WTC11 (cell line): ENCODE measurements at regions of chrX and their contacts with region 1.

Region 1: GRCh38 chrX:154533416-154533815 is 13.2 kb downstream of the G6PD start:
- DNase-seq: no peak
- ATAC-seq: no peak
- H3K4me3 Mint-ChIP-seq: no peak overlapping the region
- H3K27ac Mint-ChIP-seq: no peak overlapping the region
- H3K4me1 Mint-ChIP-seq: no peaks in the 10 kb centered on the region
- H3K27me3 Mint-ChIP-seq: no peaks in the 10 kb centered on the region
- CTCF ChIP-seq: no peak

Region 2: DNA sequence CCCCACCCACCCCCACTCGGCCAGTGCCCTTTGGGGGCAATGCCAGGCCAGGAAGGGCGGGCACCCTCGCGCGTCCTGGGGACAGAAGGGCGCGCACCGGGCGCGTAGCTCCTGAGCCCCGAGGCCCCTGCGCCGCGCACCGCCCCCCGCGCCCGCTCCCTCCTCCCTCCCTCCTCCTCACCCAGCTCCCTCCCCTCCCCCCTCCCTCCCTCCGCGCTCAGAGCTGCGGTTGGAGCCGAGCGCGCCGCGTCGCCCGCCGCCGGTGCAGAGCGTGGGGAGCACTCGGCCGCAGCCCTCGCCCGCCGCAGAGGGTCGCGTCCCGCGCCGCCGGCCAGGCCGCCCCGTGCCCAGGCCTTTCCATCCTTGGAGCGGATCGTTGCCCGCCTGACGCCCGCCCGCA is 1016.0 kb before region 1 on chrX and contains the start of gene ATP2B3:
- CTCF ChIA-PET with region 1: no interaction called
- POLR2A ChIA-PET with region 1: interaction called, 11 read pairs
- DNase-seq: no peak
- ATAC-seq: no peak; the same call in 1 of the 2 replicates
- H3K4me3 Mint-ChIP-seq: peak within 1 kb of the TSS; percentile 73
- H3K27ac Mint-ChIP-seq: no peak within 1 kb of the TSS
- H3K4me1 Mint-ChIP-seq: 0 out of 2 replicates have a peak, but pooled peaks cover 3% of the 10 kb centered on the region
- H3K27me3 Mint-ChIP-seq: peaks cover 37% of the 10 kb centered on the region
- CTCF ChIP-seq: no peak
- total RNA-seq, gene ATP2B3: 0.28 to 0.32 TPM (median 0.30 TPM) in 3 replicates

Region 3: GRCh38 chrX:154478728-154479622 is 54.4 kb before region 1 on chrX and contains the start of gene LAGE3:
- CTCF ChIA-PET with region 1: no interaction called
- POLR2A ChIA-PET with region 1: no interaction called
- DNase-seq: peak; percentile 93
- ATAC-seq: peak; percentile 90
- H3K4me3 Mint-ChIP-seq: peak within 1 kb of the TSS; percentile 74
- H3K27ac Mint-ChIP-seq: no peak within 1 kb of the TSS
- H3K4me1 Mint-ChIP-seq: peaks cover 3% of the 10 kb centered on the region; the same call in 1 of the 2 replicates
- H3K27me3 Mint-ChIP-seq: peaks cover 2% of the 10 kb centered on the region; the same call in 1 of the 2 replicates
- CTCF ChIP-seq: no peak
- total RNA-seq, gene LAGE3: 46.1 to 52.1 TPM (median 50.2 TPM) in 3 replicates